Colonic mucosa (tissue), 4 donors: ENCODE measurements at regions of chr16 and their contacts with region 1.

Region 1: GRCh38 chr16:48623304-48624016 is 13.5 kb upstream of the N4BP1 start:
- DNase-seq: peak; percentile 85
- H3K4me3 ChIP-seq: peak overlapping the region; percentile 30
- H3K27ac ChIP-seq: peak overlapping the region; percentile 35
- H3K4me1 ChIP-seq: no peaks in the 10 kb centered on the region
- H3K27me3 ChIP-seq: no peaks in the 10 kb centered on the region
- CTCF ChIP-seq: peak; percentile 99

Region 2: GRCh38 chr16:48244080-48244862 is 379.2 kb before region 1 on chr16 and contains the start of gene LONP2:
- intact Hi-C with region 1: loop called (anchors 10 kb)
- DNase-seq: peak; percentile 95
- H3K4me3 ChIP-seq: peak within 1 kb of the TSS; percentile 89
- H3K27ac ChIP-seq: peak within 1 kb of the TSS; percentile 78
- H3K4me1 ChIP-seq: peaks cover 14% of the 10 kb centered on the region
- H3K27me3 ChIP-seq: no peaks in the 10 kb centered on the region
- CTCF ChIP-seq: no peak
- total RNA-seq, gene LONP2: 62.4 to 69.2 TPM

Region 3: GRCh38 chr16:48542020-48542473 is 81.4 kb before region 1 on chr16:
- intact Hi-C with region 1: loop called (anchors 5 kb)
- DNase-seq: peak; percentile 57
- H3K4me3 ChIP-seq: no peak overlapping the region
- H3K27ac ChIP-seq: no peak overlapping the region
- H3K4me1 ChIP-seq: peaks cover 4% of the 10 kb centered on the region
- H3K27me3 ChIP-seq: no peaks in the 10 kb centered on the region
- CTCF ChIP-seq: peak; percentile 36

Region 4: DNA sequence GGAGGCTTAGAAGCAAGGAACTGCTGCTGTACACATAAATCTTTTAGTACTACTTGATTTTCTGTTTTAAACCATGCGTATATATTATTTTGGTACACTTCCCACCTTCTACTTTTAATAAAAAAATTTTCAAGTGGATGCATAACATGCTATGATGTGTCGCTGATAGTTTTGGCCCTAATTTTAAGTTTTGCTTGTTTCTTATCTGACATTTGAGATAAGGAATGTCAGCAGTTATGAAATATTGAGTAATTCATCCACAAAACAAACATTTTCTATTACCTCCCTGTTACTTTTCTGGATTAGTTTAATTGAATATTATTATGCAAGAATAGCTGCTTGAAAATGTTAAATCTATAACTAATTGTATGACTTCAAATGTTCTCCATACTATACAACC is 49.3 kb before region 1 on chr16:
- intact Hi-C with region 1: no loop called
- DNase-seq: no peak
- H3K4me3 ChIP-seq: no peak overlapping the region
- H3K27ac ChIP-seq: no peak overlapping the region
- H3K4me1 ChIP-seq: no peaks in the 10 kb centered on the region
- H3K27me3 ChIP-seq: no peaks in the 10 kb centered on the region
- CTCF ChIP-seq: no peak

Region 5: DNA sequence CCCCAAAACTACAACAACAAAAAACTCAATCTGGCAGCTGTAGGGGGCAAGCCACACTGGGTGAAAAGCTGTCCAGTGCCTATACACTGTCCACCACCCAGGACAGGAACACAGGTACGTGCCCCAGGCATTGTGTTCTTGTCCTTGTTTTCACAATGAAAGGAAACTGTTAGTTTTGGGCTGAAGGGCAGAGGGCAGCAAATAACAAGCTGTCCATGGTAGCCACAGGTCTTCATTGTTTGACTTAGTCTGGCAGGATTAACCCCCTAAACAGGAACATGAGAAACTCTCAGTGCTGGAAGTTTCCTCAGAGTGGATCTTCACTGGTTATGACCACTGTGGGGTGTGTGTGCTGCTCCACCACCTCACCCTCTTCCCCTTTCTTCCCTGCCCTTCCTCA is 211.1 kb after region 1 on chr16:
- intact Hi-C with region 1: no loop called
- DNase-seq: no peak
- H3K4me3 ChIP-seq: no peak overlapping the region
- H3K27ac ChIP-seq: no peak overlapping the region
- H3K4me1 ChIP-seq: no peaks in the 10 kb centered on the region
- H3K27me3 ChIP-seq: no peaks in the 10 kb centered on the region
- CTCF ChIP-seq: no peak

Region 6: GRCh38 chr16:48862087-48862532 is 238.7 kb after region 1 on chr16:
- intact Hi-C with region 1: no loop called
- DNase-seq: peak; percentile 17
- H3K4me3 ChIP-seq: no peak overlapping the region
- H3K27ac ChIP-seq: no peak overlapping the region
- H3K4me1 ChIP-seq: no peaks in the 10 kb centered on the region
- H3K27me3 ChIP-seq: no peaks in the 10 kb centered on the region
- CTCF ChIP-seq: no peak